GM12878 (cell line): ENCODE measurements at regions of chr12 and their contacts with region 1.

Region 1: DNA sequence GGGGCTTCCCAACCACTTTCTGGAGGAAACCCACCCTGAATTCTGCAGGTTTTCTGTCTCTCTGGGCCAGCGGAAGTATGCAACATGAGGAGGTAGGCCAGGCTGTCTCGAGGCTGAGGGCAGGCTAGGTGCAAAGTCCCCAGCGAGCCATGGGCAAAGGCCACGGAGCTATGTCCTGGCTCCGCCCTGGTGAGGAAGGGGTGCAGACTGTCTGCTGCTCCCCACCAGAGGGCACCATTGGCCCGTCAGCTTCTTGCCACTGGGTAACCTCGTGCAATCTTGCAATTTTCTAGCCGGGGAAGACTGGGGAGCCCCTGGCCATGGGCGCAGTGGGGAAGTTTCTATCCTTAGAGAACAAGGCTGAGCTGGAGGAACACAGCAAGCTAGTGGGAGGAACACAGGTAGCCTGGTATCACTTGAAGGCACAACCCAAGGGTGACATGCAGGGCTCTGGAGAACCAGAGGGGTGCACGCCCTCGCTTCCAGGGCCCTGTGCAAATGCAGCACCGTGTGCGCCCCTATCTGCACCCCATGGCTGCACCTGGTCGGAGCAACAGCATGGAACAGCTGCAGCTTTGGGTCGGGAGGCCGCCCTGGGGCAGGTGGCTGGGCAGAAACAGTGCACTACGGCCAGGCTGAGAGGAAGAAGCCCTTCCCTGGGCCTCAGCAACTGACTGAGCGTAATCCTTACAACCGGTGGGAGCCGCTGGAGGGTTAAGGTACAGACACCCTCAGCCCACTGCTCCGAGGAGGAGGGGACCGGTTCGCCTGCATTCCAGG is 27.6 kb upstream of the RPLP0 start:
- DNase-seq: peak; percentile 49
- ATAC-seq: peak; percentile 98
- H3K4me3 ChIP-seq: no peak overlapping the region
- H3K27ac ChIP-seq: no peak overlapping the region
- H3K4me1 ChIP-seq: peaks cover 32% of the 10 kb centered on the region
- H3K27me3 ChIP-seq: no peaks in the 10 kb centered on the region
- CTCF ChIP-seq: peak; percentile 94 to 97 (median 96)
- EP300 ChIP-seq: no peak
- POLR2A ChIP-seq: no peak
- RAD21 ChIP-seq: peak; percentile 96

Region 2: DNA sequence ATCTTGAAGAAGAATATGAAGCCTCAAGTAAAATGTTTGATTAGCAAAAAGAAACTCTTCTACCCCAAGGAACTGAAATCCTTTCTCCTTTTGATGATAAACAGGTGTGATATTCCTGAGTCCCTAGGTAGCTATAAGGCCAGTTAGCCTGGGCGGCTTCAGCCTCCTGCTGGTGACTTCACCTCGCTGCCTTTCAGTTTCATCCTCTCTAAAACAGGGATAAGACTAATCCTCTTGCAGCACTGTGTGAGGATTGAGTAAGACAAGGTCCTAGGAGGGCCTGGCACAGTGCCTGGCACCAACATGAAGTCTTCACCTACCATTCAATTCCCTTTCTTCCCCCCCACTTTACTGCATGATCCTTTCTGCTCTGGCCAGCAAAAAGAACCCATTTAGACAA is 393.4 kb before region 1 on chr12:
- CTCF ChIA-PET with region 1: no interaction called
- POLR2A ChIA-PET with region 1: no interaction called
- RAD21 ChIA-PET with region 1: no interaction called
- SMC1A ChIA-PET with region 1: no interaction called
- in situ Hi-C with region 1: no loop called
- intact Hi-C with region 1: no loop called
- DNase-seq: no peak
- ATAC-seq: no peak
- H3K4me3 ChIP-seq: no peak overlapping the region
- H3K27ac ChIP-seq: no peak overlapping the region
- H3K4me1 ChIP-seq: no peaks in the 10 kb centered on the region
- H3K27me3 ChIP-seq: no peaks in the 10 kb centered on the region
- CTCF ChIP-seq: no peak
- EP300 ChIP-seq: no peak
- POLR2A ChIP-seq: no peak
- RAD21 ChIP-seq: no peak

Region 3: GRCh38 chr12:120194534-120195395 is 33.7 kb before region 1 on chr12 and contains the start of gene GCN1:
- CTCF ChIA-PET with region 1: interaction called, 48 read pairs
- POLR2A ChIA-PET with region 1: no interaction called
- RAD21 ChIA-PET with region 1: interaction called, 4 read pairs
- SMC1A ChIA-PET with region 1: interaction called, 26 read pairs
- in situ Hi-C with region 1: no loop called
- intact Hi-C with region 1: no loop called
- DNase-seq: no peak
- ATAC-seq: peak; percentile 86
- H3K4me3 ChIP-seq: peak within 1 kb of the TSS; percentile 62
- H3K27ac ChIP-seq: peak within 1 kb of the TSS; percentile 93
- H3K4me1 ChIP-seq: peaks cover 33% of the 10 kb centered on the region
- H3K27me3 ChIP-seq: no peaks in the 10 kb centered on the region
- CTCF ChIP-seq: no peak
- EP300 ChIP-seq: no peak
- POLR2A ChIP-seq: peak; percentile 96
- RAD21 ChIP-seq: no peak
- polyA plus RNA-seq, gene GCN1: 10.8 to 12.1 TPM

Region 4: DNA sequence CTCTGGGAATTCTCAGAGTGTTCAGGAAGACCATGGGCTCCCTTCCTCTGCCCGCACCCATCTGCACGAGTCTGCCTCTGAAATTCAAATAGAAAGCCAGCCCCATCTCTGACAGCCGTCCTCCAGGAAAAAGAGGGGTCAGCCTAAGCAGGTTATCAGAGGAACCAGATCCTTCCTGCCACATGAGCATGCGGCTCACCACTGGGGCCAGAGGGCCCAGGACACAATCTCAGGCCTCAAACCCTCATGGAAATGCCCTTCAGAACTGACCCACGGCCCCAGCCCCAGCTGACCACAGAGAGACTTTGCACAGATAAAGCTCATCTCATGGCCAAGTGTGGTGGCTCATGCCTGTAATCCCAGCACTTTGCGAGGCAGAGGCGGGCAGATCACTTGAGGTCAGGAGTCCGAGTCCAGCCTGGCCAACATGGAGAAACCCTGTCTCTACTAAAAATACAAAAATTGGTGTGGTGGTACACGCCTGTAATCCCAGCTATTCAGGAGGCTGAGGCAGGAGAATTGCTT is 13.9 kb after region 1 on chr12:
- CTCF ChIA-PET with region 1: interaction called, 55 read pairs
- POLR2A ChIA-PET with region 1: interaction called, 5 read pairs
- RAD21 ChIA-PET with region 1: interaction called, 18 read pairs
- SMC1A ChIA-PET with region 1: interaction called, 28 read pairs
- in situ Hi-C with region 1: no loop called
- intact Hi-C with region 1: no loop called
- DNase-seq: no peak
- ATAC-seq: no peak
- H3K4me3 ChIP-seq: no peak overlapping the region
- H3K27ac ChIP-seq: no peak overlapping the region
- H3K4me1 ChIP-seq: no peaks in the 10 kb centered on the region
- H3K27me3 ChIP-seq: no peaks in the 10 kb centered on the region; a peak in 1 of 4 replicates
- CTCF ChIP-seq: no peak
- EP300 ChIP-seq: no peak
- POLR2A ChIP-seq: no peak
- RAD21 ChIP-seq: no peak

Region 5: DNA sequence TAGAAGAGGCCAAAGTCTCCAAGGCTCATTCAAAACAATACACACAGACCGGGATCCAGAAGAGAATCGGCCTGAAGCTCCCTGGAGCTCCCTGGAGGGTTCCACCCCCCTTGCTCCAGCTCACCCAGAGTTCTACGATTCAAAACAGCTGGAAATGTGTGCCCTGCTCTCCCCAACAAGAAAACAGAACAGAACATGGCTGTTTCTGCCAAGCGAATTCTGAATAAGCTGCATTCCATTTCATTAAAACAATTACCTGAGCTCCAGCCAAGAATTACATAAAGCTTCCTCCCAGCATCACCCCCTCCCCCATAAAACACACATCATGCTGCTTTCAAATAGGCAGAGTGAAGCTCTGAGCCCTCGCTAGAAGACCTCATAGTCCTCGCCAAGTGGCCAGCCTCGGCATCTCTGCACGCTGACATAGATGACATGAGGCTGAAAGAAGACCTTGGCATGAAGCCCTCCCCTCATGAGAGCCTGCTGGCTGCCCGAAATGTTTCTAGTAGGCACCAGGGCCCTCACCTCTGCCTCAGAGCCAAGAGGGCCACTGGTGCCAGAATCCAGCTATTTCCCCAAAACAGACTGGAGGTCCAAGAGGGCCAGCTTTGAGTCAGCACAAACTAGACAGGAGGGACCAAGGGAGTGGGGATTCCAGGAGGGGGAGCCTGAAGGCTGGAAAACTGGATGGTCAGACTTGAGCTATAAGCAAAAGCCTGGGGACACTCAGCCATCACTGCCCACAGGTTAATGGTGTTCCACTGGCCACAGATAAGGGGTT is 28.8 kb after region 1 on chr12:
- CTCF ChIA-PET with region 1: interaction called, 287 read pairs
- POLR2A ChIA-PET with region 1: interaction called, 13 read pairs
- RAD21 ChIA-PET with region 1: interaction called, 37 read pairs
- SMC1A ChIA-PET with region 1: interaction called, 152 read pairs
- in situ Hi-C with region 1: no loop called
- intact Hi-C with region 1: no loop called
- DNase-seq: no peak
- ATAC-seq: no peak
- H3K4me3 ChIP-seq: no peak overlapping the region
- H3K27ac ChIP-seq: no peak overlapping the region
- H3K4me1 ChIP-seq: peaks cover 12% of the 10 kb centered on the region; the same call in 1 of the 2 replicates
- H3K27me3 ChIP-seq: no peaks in the 10 kb centered on the region
- CTCF ChIP-seq: no peak
- EP300 ChIP-seq: no peak
- POLR2A ChIP-seq: no peak
- RAD21 ChIP-seq: no peak

Region 6: GRCh38 chr12:120276734-120277133 is 48.3 kb after region 1 on chr12:
- CTCF ChIA-PET with region 1: interaction called, 4 read pairs
- POLR2A ChIA-PET with region 1: no interaction called
- RAD21 ChIA-PET with region 1: interaction called, 4 read pairs
- SMC1A ChIA-PET with region 1: interaction called, 3 read pairs
- in situ Hi-C with region 1: loop called (anchors 10 kb)
- intact Hi-C with region 1: no loop called
- DNase-seq: no peak
- ATAC-seq: no peak
- H3K4me3 ChIP-seq: no peak overlapping the region
- H3K27ac ChIP-seq: no peak overlapping the region
- H3K4me1 ChIP-seq: no peaks in the 10 kb centered on the region
- H3K27me3 ChIP-seq: no peaks in the 10 kb centered on the region
- CTCF ChIP-seq: no peak
- EP300 ChIP-seq: no peak
- POLR2A ChIP-seq: no peak
- RAD21 ChIP-seq: no peak

Region 7: DNA sequence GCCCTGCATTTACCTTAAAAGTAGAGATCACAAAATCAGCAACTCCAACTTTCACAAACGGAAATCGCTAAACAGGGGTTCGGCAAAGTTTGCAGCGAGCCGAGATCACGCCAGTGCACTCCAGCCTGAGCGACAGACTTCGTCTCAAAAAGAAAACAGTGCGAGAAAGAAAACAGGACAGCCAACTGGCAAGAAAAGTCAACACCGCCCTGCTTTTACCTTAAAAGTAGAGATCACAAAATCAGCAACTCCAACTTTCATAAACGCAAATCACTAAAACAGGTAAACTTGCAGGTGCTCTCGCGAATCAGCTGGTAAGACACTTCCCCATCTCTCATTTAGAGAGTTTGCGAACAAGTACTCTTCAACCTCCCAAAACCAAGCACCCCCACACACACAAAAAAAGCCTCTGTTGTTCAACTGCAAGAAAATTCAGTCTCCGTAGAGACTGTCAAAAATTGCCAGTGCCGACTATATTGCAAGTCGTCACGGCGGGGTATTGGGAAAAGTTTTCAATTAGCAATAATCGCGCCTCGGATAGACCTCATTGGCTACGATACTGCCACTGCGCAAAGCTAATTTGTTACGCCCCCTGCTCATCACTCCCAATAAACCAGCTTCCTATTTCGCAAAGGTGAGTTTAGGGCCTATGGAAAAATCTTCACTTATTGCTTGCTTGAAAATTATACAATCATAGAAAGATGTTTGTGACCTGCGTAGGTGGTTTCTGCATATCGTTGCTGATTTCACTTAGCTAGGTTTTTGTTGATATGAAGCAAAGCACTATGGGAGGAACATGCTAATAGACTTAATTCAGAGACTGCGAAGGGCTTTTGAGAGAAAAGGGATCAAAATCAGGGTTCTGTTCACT is 64.4 kb after region 1 on chr12 and contains the start of gene RNU4-1:
- CTCF ChIA-PET with region 1: interaction called, 28 read pairs
- POLR2A ChIA-PET with region 1: interaction called, 12 read pairs
- RAD21 ChIA-PET with region 1: interaction called, 17 read pairs
- SMC1A ChIA-PET with region 1: interaction called, 30 read pairs
- in situ Hi-C with region 1: no loop called
- intact Hi-C with region 1: loop called (anchors 1 kb)
- DNase-seq: peak; percentile 92
- ATAC-seq: peak; percentile 78
- H3K4me3 ChIP-seq: peak within 1 kb of the TSS; percentile 66
- H3K27ac ChIP-seq: peak within 1 kb of the TSS; percentile 100
- H3K4me1 ChIP-seq: peaks cover 9% of the 10 kb centered on the region
- H3K27me3 ChIP-seq: no peaks in the 10 kb centered on the region
- CTCF ChIP-seq: no peak
- EP300 ChIP-seq: 0 out of 4 replicates have a peak, but pooled peaks of 1 of the 2 experiments have one; percentile 16
- POLR2A ChIP-seq: peak; percentile 97
- RAD21 ChIP-seq: no peak
- polyA plus RNA-seq, gene RNU4-1: 11.5 TPM in 1 of 2 experiments, not detected in the other

Region 8: GRCh38 chr12:121776190-121777098 is 1548.0 kb after region 1 on chr12:
- CTCF ChIA-PET with region 1: no interaction called
- POLR2A ChIA-PET with region 1: no interaction called
- RAD21 ChIA-PET with region 1: no interaction called
- SMC1A ChIA-PET with region 1: no interaction called
- in situ Hi-C with region 1: no loop called
- intact Hi-C with region 1: no loop called
- DNase-seq: no peak
- ATAC-seq: peak; percentile 89
- H3K4me3 ChIP-seq: no peak overlapping the region
- H3K27ac ChIP-seq: no peak overlapping the region
- H3K4me1 ChIP-seq: peaks cover 20% of the 10 kb centered on the region
- H3K27me3 ChIP-seq: no peaks in the 10 kb centered on the region
- CTCF ChIP-seq: peak; percentile 79 to 92 (median 90)
- EP300 ChIP-seq: no peak
- POLR2A ChIP-seq: peak; percentile 25; the same call in 1 of the 2 replicates
- RAD21 ChIP-seq: peak; percentile 82